Esophagus muscularis mucosa (tissue), 4 donors: ENCODE measurements at regions of chr1 and their contacts with region 1.

Region 1: GRCh38 chr1:116724765-116725375 is 29.4 kb upstream of the CD2 start:
- DNase-seq: no peak
- H3K4me3 ChIP-seq: no peak overlapping the region
- H3K27ac ChIP-seq: no peak overlapping the region
- H3K4me1 ChIP-seq: no peaks in the 10 kb centered on the region
- H3K27me3 ChIP-seq: no peaks in the 10 kb centered on the region
- CTCF ChIP-seq: peak; percentile 49 to 68 (median 58)
- EP300 ChIP-seq: no peak
- POLR2A ChIP-seq: no peak

Region 2: GRCh38 chr1:116763787-116764465 is 39.1 kb after region 1 on chr1:
- intact Hi-C with region 1: no loop called
- DNase-seq: no peak
- H3K4me3 ChIP-seq: no peak overlapping the region
- H3K27ac ChIP-seq: no peak overlapping the region
- H3K4me1 ChIP-seq: peaks cover 0 to 15% (median 6%) of the 10 kb centered on the region in 4 donors
- H3K27me3 ChIP-seq: no peaks in the 10 kb centered on the region
- CTCF ChIP-seq: peak in 2 of 3 experiments; percentile 10 to 27
- EP300 ChIP-seq: no peak
- POLR2A ChIP-seq: no peak

Region 3: DNA sequence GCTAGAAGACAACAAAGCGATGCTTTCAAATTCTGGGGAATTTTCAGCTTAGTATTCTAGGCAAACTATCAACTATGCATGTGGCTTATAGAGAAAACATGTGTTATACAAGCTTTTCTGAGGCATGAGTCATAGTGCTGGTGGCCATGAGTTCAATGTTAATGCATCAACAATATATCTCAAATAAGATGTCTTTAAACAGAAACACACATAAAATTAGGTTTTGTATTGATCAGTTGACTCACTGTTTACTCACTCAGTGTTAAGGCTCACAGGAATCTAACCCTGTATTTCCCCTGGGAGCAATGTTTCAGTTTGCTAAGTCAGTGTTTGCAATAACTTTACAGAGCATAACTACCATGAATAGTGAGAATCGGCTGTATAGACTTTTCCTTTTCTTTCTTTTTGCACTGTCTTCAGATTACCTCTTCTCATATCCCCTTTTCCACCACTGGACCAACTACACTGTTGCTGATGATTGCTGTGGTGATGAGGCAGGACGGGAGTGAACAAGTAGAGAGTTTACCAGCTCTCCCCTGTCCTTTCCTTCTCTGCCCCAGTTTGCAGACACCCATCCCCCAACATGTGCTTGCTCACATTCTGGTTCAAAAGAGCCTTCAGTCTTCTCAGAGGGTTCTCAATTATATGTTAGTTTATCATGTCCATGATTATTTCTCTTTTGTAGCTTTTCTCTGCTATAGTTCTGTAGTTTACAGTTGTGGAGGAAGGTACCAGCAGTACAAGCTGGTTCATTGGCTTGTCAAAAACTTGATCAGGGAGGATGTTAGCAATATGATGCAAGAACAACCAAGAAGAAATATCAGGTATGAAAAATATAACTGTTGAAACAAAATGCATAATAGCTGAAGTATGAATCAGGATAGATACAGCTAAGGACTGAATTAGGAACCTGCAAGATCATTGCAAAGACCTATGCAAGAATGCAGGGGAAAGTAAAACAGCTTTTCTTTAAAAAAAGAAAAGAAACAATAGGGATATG is 53.3 kb after region 1 on chr1:
- intact Hi-C with region 1: loop called (anchors 5 kb)
- DNase-seq: no peak
- H3K4me3 ChIP-seq: no peak overlapping the region
- H3K27ac ChIP-seq: no peak overlapping the region
- H3K4me1 ChIP-seq: no peaks in the 10 kb centered on the region
- H3K27me3 ChIP-seq: peaks cover 0 to 10% (median 0%) of the 10 kb centered on the region in 4 donors
- CTCF ChIP-seq: no peak
- EP300 ChIP-seq: no peak
- POLR2A ChIP-seq: no peak

Region 4: GRCh38 chr1:116808200-116808847 is 83.5 kb after region 1 on chr1:
- intact Hi-C with region 1: no loop called
- DNase-seq: peak; percentile 17
- H3K4me3 ChIP-seq: no peak overlapping the region
- H3K27ac ChIP-seq: no peak overlapping the region
- H3K4me1 ChIP-seq: no peaks in the 10 kb centered on the region
- H3K27me3 ChIP-seq: no peaks in the 10 kb centered on the region
- CTCF ChIP-seq: no peak
- EP300 ChIP-seq: no peak
- POLR2A ChIP-seq: no peak